PC-3 (cell line): ENCODE measurements at regions of chr13 and their contacts with region 1.

Region 1: DNA sequence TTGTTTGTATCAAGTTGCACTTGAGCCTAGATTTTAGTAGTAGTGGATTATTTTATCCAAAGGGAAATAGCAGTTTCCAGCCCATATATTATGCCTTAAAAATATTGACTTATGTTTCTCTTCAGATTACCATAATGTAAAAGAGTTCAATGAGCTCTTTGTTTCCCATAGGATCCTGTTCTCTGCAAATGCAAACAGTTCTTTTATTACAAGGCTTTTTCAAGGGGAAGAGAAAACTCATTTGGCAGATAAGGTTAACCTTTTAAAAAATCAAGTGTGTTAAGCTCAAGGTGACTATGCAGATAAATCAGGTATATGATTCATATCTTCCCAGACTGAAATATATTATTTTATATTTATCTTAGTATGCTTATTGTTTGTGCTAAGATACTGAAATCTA is 961.2 kb upstream of the SPRY2 start:
- DNase-seq: no peak
- ATAC-seq: peak; percentile 32
- H3K4me3 ChIP-seq: no peak overlapping the region
- H3K27ac ChIP-seq: no peak overlapping the region
- H3K4me1 ChIP-seq: peaks cover 11% of the 10 kb centered on the region
- H3K27me3 ChIP-seq: no peaks in the 10 kb centered on the region
- CTCF ChIP-seq: no peak

Region 2: GRCh38 chr13:81171065-81171647 is 131.0 kb before region 1 on chr13:
- CTCF ChIA-PET with region 1: no interaction called
- POLR2A ChIA-PET with region 1: no interaction called
- intact Hi-C with region 1: no loop called
- DNase-seq: peak; percentile 54
- ATAC-seq: peak; percentile 42; the same call in 1 of the 2 replicates
- H3K4me3 ChIP-seq: no peak overlapping the region
- H3K27ac ChIP-seq: no peak overlapping the region
- H3K4me1 ChIP-seq: no peaks in the 10 kb centered on the region
- H3K27me3 ChIP-seq: no peaks in the 10 kb centered on the region
- CTCF ChIP-seq: peak; percentile 67

Region 3: DNA sequence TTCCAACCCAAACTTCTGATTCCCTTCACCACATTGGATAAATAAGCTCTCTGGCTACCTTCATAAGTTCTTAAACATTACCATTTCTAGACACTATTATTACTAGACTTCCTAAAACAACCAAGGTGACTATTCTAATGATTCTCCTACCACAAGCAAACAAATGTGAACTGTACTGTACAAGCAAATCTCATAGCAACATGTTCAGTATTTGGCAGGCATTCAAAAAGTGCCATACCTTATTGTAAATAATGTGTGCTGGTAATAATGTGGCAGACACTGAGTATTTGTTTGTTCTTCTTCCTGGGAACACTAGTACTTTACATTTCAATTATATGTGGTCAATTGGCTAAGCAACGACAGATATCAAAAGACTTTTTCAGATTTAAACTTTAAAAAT is 24.8 kb after region 1 on chr13:
- CTCF ChIA-PET with region 1: no interaction called
- POLR2A ChIA-PET with region 1: no interaction called
- intact Hi-C with region 1: loop called (anchors 1 kb)
- DNase-seq: peak; percentile 37
- ATAC-seq: peak; percentile 92
- H3K4me3 ChIP-seq: no peak overlapping the region
- H3K27ac ChIP-seq: no peak overlapping the region
- H3K4me1 ChIP-seq: no peaks in the 10 kb centered on the region
- H3K27me3 ChIP-seq: no peaks in the 10 kb centered on the region
- CTCF ChIP-seq: no peak

Region 4: GRCh38 chr13:81393721-81394120 is 91.6 kb after region 1 on chr13:
- CTCF ChIA-PET with region 1: no interaction called
- POLR2A ChIA-PET with region 1: no interaction called
- intact Hi-C with region 1: loop called (anchors 5 kb)
- DNase-seq: no peak
- ATAC-seq: peak; percentile 40
- H3K4me3 ChIP-seq: no peak overlapping the region
- H3K27ac ChIP-seq: no peak overlapping the region
- H3K4me1 ChIP-seq: peaks cover 5% of the 10 kb centered on the region; the same call in 1 of the 2 replicates
- H3K27me3 ChIP-seq: no peaks in the 10 kb centered on the region
- CTCF ChIP-seq: no peak

Region 5: GRCh38 chr13:81602241-81602640 is 300.1 kb after region 1 on chr13:
- CTCF ChIA-PET with region 1: no interaction called
- POLR2A ChIA-PET with region 1: no interaction called
- intact Hi-C with region 1: no loop called
- DNase-seq: no peak
- ATAC-seq: no peak
- H3K4me3 ChIP-seq: no peak overlapping the region
- H3K27ac ChIP-seq: no peak overlapping the region
- H3K4me1 ChIP-seq: no peaks in the 10 kb centered on the region
- H3K27me3 ChIP-seq: no peaks in the 10 kb centered on the region
- CTCF ChIP-seq: no peak